T-cell (primary cell): ENCODE measurements at regions of chr9 and their contacts with region 1.

Region 1: DNA sequence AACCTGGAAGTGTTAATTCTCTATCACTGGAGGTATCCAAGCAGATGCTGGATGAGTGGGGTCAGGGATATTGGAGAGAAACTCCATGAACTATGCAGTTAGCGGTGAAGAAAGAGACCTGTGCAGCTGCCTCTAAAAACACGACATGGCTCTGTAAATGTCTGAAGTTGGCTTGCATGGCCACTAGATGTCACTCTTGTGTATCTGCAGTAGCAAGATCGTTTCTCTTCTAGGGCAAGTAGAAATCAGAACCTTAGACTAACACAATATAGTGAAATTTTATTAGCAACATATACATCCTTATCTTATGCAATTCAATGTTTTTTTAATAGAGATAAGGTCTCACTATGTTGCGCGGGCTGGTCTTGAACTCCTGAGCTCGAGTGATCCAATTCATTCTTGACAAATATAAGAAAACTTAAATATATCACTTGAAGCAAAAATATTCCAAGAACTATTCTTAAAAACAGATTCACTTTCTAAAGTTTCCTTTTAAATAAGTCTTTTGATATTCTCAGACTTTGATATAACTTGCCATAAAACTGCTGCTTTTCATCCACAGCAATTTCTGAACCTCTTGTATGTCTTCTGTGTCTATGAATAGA is 2.9 kb downstream of the OR2S2 start:
- DNase-seq: peak in 32 of 35 experiments; percentile 6 to 82 (median 36)
- ATAC-seq: peak; percentile 76 to 80 (median 78)
- H3K4me3 ChIP-seq: no peak overlapping the region
- H3K4me3 Mint-ChIP-seq: no peak overlapping the region
- H3K27ac ChIP-seq: no peak overlapping the region
- H3K27ac Mint-ChIP-seq: peak overlapping the region in 1 of 2 donors; percentile 49
- H3K4me1 ChIP-seq: no peaks in the 10 kb centered on the region
- H3K4me1 Mint-ChIP-seq: peaks cover 4 to 8% (median 6%) of the 10 kb centered on the region in 3 donors
- H3K27me3 ChIP-seq: peaks cover 0 to 11% of the 10 kb centered on the region in 2 experiments
- H3K27me3 Mint-ChIP-seq: peaks cover 0 to 18% of the 10 kb centered on the region in 2 donors

Region 2: GRCh38 chr9:35859310-35859989 is 95.6 kb before region 1 on chr9:
- CTCF ChIA-PET with region 1: no interaction called
- POLR2A ChIA-PET with region 1: no interaction called
- DNase-seq: peak in 6 of 35 experiments; percentile 2 to 32 (median 10)
- ATAC-seq: peak in 2 of 4 experiments; percentile 42 to 46
- H3K4me3 ChIP-seq: no peak overlapping the region
- H3K4me3 Mint-ChIP-seq: no peak overlapping the region
- H3K27ac ChIP-seq: no peak overlapping the region
- H3K27ac Mint-ChIP-seq: no peak overlapping the region
- H3K4me1 ChIP-seq: no peaks in the 10 kb centered on the region
- H3K4me1 Mint-ChIP-seq: peaks cover 0 to 8% (median 4%) of the 10 kb centered on the region in 3 donors
- H3K27me3 ChIP-seq: peaks cover 0 to 21% of the 10 kb centered on the region in 2 experiments
- H3K27me3 Mint-ChIP-seq: peaks cover 23 to 30% of the 10 kb centered on the region in 2 donors

Region 3: DNA sequence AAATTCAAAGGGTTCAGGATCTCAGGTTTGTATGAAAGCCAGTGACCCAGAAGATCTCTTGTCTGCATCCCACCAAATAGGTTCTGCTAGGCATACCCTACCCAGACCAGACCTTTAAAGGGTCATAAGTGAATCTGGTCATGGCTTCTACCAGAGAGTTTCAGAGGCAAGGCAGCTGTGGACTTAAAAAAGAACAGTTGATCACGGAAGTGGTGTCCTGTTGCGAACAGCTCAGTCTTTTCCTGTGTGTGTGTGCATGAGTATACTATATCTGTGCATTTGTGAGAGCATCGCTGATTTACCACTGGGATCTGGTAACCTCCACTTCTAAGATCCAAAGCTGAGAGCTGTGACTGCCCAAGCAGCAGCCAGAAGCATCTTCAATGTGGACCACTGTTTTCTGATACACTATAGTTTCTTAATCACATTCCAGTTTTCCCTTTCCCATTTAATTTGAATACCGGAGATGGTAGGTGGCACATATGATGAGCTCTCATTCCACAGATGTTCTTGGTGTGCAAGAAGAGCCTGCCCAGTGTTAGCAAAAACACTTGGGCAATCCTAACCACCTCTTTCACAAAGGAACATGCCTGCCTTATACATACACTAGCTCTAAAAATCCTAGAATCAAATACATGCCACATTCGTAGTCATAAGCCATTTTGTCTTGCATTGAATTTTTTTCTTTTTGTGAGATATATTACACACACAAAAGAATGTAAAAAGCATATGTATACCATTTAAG is 39.1 kb after region 1 on chr9:
- CTCF ChIA-PET with region 1: no interaction called
- POLR2A ChIA-PET with region 1: no interaction called
- DNase-seq: no peak
- ATAC-seq: no peak
- H3K4me3 ChIP-seq: no peak overlapping the region
- H3K4me3 Mint-ChIP-seq: no peak overlapping the region
- H3K27ac ChIP-seq: no peak overlapping the region
- H3K27ac Mint-ChIP-seq: no peak overlapping the region
- H3K4me1 ChIP-seq: no peaks in the 10 kb centered on the region
- H3K4me1 Mint-ChIP-seq: no peaks in the 10 kb centered on the region
- H3K27me3 ChIP-seq: peaks cover 0 to 3% of the 10 kb centered on the region in 2 experiments
- H3K27me3 Mint-ChIP-seq: peaks cover 22 to 29% of the 10 kb centered on the region in 2 donors

Region 4: GRCh38 chr9:36158917-36159316 is 203.9 kb after region 1 on chr9:
- CTCF ChIA-PET with region 1: interaction called in 1 of 2 experiments, 11 read pairs
- POLR2A ChIA-PET with region 1: no interaction called
- DNase-seq: no peak
- ATAC-seq: no peak
- H3K4me3 ChIP-seq: no peak overlapping the region
- H3K4me3 Mint-ChIP-seq: no peak overlapping the region
- H3K27ac ChIP-seq: no peak overlapping the region
- H3K27ac Mint-ChIP-seq: no peak overlapping the region
- H3K4me1 ChIP-seq: peaks cover 0 to 8% of the 10 kb centered on the region in 2 experiments
- H3K4me1 Mint-ChIP-seq: peaks cover 11 to 26% (median 20%) of the 10 kb centered on the region in 3 donors
- H3K27me3 ChIP-seq: no peaks in the 10 kb centered on the region
- H3K27me3 Mint-ChIP-seq: no peaks in the 10 kb centered on the region